ENCODE measurements at regions of chr2 and their contacts with region 1.

Region 1: GRCh38 chr2:48107326-48107925 is 201.1 kb upstream of the FBXO11 start:
- DNase-seq: no peak
- H3K4me3 ChIP-seq: no peak overlapping the region
- H3K27ac ChIP-seq: peak overlapping the region; percentile 5
- H3K4me1 ChIP-seq: no peaks in the 10 kb centered on the region
- H3K27me3 ChIP-seq: no peaks in the 10 kb centered on the region
- CTCF ChIP-seq: no peak

Region 2: DNA sequence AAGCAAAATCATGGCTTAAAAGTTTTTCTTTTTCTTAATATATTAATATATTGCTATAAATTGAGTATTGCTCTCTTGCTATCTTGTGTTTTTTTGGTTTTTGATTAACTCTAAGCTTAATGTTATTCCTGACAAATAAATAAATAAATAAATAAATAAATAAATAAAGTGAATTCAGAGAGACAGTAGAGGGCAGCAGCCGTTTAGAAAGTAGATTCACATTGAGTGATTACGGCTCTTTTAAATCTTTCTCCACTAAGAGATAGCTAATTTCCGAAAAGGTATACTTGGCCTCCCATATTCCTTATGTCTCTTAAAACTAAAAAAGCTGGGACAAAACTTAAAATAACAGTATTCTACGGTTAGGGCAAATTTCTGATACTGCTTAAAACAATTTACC is 670.1 kb before region 1 on chr2:
- intact Hi-C with region 1: loop called (anchors 10 kb)
- DNase-seq: no peak
- H3K4me3 ChIP-seq: no peak overlapping the region
- H3K27ac ChIP-seq: no peak overlapping the region
- H3K4me1 ChIP-seq: no peaks in the 10 kb centered on the region
- H3K27me3 ChIP-seq: no peaks in the 10 kb centered on the region
- CTCF ChIP-seq: peak; percentile 17

Region 3: GRCh38 chr2:47862949-47863348 is 244.5 kb before region 1 on chr2:
- intact Hi-C with region 1: loop called (anchors 5 kb)
- DNase-seq: no peak
- H3K4me3 ChIP-seq: no peak overlapping the region
- H3K27ac ChIP-seq: no peak overlapping the region
- H3K4me1 ChIP-seq: no peaks in the 10 kb centered on the region
- H3K27me3 ChIP-seq: no peaks in the 10 kb centered on the region
- CTCF ChIP-seq: no peak

Region 4: DNA sequence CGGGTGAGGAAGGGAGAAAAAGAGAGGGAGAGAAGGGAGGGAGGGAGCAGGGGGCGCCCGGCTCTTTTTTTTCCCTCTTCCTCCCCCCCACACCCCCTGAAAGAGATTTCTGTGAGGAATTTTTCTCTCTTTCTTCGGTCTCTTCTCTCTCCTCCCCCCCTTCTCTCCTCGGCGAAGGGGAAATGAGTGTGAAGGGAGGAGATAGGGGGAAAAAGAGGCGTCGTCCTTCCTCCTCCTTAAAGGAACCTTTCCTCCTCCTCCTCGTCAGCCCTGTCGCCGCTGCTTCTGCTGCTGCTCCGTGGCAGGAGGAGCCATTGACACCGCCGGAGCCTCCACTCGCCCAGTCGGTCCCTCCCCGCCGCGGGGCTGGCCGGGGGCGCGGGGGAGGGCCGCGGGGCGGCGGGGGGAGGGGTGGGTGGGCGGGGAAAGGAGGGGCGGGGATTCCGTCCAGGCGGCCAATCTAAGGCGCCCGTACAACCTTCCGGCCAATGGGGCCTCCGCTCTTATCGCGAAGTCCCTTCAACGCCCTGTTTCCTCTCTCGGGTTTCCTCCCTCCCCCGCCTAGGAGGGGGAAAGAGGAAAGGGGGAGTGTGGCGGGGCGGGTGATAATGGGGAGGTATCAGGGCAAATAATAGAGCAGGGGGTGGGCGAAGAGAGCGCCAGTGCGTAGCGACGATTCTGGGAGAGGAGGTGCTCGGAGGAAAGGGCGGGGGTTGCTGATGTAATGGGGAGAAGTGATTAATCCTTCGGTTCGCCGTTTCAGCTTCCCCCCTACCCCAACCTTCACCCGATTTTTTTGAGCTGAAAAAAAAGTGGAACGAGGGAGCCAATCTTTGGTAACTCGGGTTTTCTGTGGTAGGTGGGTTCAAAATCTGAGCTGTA is 201.0 kb before region 1 on chr2 and contains the start of gene FBXO11:
- intact Hi-C with region 1: loop called (anchors 10 kb)
- DNase-seq: peak; percentile 96
- H3K4me3 ChIP-seq: peak within 1 kb of the TSS; percentile 77
- H3K27ac ChIP-seq: peak within 1 kb of the TSS; percentile 99
- H3K4me1 ChIP-seq: no peaks in the 10 kb centered on the region
- H3K27me3 ChIP-seq: no peaks in the 10 kb centered on the region
- CTCF ChIP-seq: no peak
- total RNA-seq, gene FBXO11: 40.4 to 47.7 TPM